Right ventricle myocardium inferior (tissue), 1 donor: ENCODE measurements at regions of chr15 and their contacts with region 1.

Region 1: DNA sequence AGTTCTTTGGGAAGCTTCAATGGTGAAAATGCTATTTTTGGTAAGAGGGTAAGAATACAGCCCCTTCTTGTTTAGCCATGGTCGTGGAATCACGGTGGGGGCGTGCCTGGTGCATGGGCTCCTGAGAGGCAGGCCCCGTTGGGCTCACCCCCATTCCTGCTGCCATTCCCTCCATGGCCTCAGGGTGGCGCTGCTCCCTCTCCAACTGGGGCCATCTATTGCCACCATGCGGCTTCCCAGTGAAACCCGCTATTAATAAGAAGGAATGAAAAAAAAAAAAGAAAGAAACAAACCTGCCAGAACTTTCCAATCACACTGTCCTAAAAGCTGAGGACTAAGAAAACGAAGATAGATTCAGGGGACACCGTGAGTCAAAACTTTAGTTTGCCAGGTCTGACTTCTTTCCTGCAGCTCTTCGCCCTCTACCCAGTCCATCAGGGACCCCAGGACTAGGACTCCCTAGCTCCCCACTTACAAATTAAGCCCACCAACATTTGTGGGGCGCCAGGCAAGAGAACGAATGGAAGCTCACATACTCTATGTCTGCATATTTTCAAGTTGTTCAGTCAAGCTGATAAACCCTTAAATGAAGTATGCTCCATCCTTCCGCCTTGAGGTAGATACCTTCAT is 30.6 kb upstream of the ABHD2 start:
- DNase-seq: peak; percentile 91
- ATAC-seq: peak; percentile 89

Region 2: DNA sequence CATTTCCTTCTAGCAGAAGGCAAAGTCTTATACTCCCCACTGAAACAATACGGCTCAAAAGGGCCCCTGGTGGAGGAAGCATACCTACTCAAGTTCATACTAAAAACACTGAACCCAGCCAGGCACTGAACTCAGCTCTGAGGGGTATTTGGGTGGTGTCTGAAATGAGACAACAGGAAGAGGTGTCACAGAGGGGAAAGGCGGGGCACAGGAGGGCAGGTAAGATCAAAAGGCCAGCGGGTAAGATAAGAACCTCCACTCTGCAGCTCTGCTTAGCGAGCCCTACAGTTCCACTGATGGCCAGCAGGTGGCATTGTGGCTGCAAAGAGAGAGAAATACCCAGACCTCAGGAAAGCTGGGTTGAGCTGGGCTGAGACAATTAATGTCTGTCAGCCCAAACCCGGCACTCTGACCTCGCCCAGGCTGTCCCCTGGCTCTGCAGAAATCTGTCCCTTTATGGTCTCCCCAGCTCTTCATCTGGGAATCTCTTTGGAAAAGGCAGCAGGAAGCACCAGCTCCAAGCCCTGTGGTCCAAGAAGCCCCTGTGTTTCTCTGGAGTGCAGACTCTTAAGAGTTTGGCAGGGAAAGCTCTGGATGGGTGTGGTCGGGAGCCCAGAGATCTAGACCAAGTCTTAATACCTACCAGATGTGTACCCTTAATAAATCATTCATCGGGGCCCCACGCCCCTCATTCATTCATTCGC is 152.8 kb before region 1 on chr15:
- intact Hi-C with region 1: loop called (anchors 2 kb)
- DNase-seq: peak; percentile 86
- ATAC-seq: peak; percentile 81

Region 3: DNA sequence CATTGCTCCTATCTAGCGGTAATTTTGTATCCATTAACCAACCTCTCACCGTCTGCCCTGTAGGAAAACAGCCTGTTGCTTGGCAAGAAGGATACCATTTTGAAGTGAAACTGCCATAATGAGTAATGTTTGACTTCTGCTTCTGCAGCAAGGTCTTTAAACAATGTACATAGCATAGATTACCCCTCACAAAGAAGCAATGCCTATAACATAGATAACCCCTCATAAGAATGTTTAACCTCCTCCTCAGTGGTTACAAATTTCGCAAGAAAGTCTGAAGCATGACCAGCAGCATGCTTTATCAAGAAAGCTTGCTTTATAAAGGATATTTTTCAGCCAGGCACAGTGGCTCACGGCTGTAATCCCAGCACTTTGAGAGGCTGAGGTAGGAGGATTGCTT is 83.2 kb before region 1 on chr15:
- intact Hi-C with region 1: no loop called
- DNase-seq: no peak
- ATAC-seq: no peak

Region 4: DNA sequence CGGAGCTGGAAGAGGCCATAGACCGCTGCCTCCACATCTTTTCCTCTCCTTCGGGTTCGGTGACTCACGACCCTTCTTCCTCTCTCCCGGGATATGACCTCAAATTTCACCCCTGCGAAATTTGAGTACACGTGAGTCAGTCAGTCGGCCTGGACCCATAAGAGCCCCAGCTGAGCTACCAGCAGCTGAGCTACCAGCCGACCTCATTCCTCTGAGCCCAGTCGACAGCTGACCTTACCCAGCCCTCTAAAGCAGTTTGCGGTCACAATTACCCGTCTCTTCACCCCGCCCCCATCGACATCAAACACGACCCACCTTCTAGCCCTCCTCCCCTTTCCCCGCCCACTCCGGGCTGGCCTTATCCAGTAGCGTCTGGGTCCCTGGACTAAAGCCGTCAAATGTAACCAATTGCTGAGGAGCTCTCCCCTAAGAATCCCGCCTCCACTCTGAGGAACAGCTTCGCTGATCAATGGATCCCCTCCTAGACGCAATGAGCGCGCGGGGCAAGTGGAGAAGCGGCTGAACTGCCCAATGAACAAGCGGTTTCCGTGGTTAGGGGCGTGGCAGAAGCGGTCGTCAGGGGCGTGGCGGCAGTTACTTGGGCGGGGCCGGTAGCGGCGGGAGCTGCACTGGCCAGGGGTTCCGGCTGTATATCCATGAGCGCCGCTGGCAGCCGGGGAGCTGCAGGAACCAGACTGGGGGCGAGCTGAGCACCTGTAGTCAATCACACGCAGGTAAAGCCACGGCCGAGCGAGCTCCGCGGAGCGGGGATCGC is 30.4 kb after region 1 on chr15 and contains the start of gene ABHD2:
- intact Hi-C with region 1: loop called (anchors 2 kb)
- DNase-seq: peak; percentile 99
- ATAC-seq: peak; percentile 96
- total RNA-seq, gene ABHD2: 69.9 TPM

Region 5: DNA sequence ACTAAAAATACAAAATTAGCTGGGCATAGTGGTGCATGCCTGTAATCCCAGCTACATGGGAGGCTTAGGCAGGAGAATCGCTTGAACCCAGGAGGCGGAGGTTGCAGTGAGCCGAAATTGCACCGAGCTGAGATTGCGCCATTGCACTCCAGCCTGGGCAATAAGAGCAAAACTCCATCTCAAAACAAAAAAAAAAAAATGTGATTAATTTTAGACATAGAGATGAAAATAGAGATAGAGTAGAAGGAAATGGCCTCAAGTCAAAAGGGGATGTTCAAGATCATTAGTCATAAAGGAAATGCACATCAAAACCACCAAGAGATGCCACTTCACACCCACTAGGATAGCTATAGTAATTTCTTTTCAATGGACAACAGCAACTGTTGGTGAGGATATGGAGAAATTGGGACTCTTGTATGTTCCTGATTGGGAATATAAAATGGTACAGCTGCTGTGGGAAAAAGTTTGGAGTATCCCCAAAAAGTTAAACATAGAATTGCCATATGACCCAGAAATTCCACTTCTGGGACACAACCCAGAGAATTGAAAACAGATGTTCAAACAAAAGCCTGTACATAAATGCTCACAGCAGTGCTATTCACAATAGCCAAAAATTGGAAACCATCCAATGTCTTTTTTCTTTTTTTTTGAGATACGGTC is 86.0 kb after region 1 on chr15:
- intact Hi-C with region 1: loop called (anchors 5 kb)
- DNase-seq: peak; percentile 69
- ATAC-seq: no peak

Region 6: DNA sequence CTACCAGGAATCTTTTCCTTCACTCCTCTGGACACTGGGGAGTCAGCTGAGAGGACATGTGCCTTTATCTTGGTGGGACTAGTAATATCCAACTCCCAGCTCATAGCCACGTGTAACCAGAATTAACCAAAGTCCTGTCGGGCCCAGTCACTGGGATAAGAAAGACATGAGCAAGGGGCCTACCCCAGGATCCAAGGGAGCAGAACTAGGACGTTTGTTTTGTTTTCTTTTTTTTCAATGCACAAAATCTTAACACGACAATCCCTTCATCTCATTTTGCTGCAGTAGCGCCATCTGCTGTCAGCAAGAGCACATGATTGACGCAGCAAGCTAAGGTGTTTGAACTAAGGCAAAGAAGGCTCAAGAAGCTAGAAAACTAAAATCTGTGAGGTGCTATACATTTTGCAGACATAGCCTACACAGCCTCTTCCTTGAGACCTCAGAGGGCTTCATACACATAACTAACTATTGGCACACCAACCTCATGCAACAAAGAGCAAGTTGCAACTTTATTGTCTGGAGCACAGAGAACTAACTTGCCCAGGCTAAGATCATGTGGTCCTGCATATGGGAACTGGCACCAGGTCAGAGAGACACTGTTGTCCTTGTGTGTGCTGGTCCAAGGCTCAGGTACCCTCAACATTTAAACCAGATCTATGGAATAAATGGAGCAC is 120.2 kb after region 1 on chr15:
- intact Hi-C with region 1: loop called (anchors 1 kb)
- DNase-seq: no peak
- ATAC-seq: peak; percentile 36

Region 7: DNA sequence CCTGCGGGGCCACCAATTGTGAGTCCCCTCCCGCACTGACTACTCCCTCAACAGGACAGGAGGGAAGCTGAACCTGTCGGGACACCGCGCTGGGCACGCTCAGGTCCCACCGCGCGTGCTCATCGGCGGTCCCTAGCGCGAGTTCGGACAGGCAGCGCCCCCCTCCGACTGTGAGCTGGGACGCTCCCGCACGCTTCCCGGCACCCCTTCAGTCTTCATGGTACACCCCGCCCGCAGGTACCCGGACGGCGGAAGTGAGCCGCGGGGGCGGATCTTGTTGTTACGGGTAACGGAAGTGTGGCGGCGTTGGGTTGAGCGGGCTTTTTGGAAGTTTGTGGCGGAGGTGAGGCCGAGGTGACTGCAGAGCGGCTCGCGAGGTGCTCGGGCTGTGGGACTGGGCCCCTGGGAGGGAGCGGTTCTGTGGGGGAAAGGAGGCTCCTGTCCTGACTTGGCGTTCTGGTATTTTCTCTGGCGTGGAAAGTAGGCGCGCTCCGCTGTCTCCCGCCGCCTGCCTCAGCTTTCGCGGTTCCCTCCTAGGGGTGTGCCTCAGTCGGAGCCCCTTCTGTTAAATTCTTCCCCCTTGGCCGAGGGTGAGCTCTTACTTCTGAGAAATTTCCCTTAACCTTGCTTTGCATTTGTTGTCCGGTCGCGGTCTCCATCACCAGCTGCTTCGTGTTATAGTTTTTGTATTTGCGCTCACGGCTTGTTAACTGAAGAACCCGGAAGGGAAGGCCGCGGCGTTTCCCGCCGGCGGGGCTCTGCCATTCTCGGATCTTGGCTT is 186.3 kb after region 1 on chr15 and contains the start of gene FANCI:
- intact Hi-C with region 1: no loop called
- DNase-seq: peak; percentile 98
- ATAC-seq: peak; percentile 99
- total RNA-seq, gene FANCI: 3.2 TPM